CD8-positive, alpha-beta T cell (primary cell): ENCODE measurements at regions of chr6 and their contacts with region 1.

Region 1: GRCh38 chr6:110221738-110222137 is 41.5 kb downstream of the CDC40 start:
- DNase-seq: no peak
- ATAC-seq: no peak
- H3K4me3 ChIP-seq: no peak overlapping the region
- H3K4me3 Mint-ChIP-seq: no peak overlapping the region
- H3K27ac ChIP-seq: no peak overlapping the region
- H3K27ac Mint-ChIP-seq: no peak overlapping the region
- H3K4me1 ChIP-seq: no peaks in the 10 kb centered on the region
- H3K4me1 Mint-ChIP-seq: no peaks in the 10 kb centered on the region
- H3K27me3 ChIP-seq: no peaks in the 10 kb centered on the region
- H3K27me3 Mint-ChIP-seq: no peaks in the 10 kb centered on the region
- CTCF ChIP-seq: no peak

Region 2: GRCh38 chr6:110147870-110148269 is 73.9 kb before region 1 on chr6:
- CTCF ChIA-PET with region 1: no interaction called
- POLR2A ChIA-PET with region 1: no interaction called
- intact Hi-C with region 1: no loop called
- DNase-seq: no peak
- ATAC-seq: no peak
- H3K4me3 ChIP-seq: no peak overlapping the region
- H3K4me3 Mint-ChIP-seq: no peak overlapping the region
- H3K27ac ChIP-seq: no peak overlapping the region
- H3K27ac Mint-ChIP-seq: no peak overlapping the region
- H3K4me1 ChIP-seq: no peaks in the 10 kb centered on the region
- H3K4me1 Mint-ChIP-seq: no peaks in the 10 kb centered on the region
- H3K27me3 ChIP-seq: no peaks in the 10 kb centered on the region
- H3K27me3 Mint-ChIP-seq: no peaks in the 10 kb centered on the region
- CTCF ChIP-seq: no peak

Region 3: DNA sequence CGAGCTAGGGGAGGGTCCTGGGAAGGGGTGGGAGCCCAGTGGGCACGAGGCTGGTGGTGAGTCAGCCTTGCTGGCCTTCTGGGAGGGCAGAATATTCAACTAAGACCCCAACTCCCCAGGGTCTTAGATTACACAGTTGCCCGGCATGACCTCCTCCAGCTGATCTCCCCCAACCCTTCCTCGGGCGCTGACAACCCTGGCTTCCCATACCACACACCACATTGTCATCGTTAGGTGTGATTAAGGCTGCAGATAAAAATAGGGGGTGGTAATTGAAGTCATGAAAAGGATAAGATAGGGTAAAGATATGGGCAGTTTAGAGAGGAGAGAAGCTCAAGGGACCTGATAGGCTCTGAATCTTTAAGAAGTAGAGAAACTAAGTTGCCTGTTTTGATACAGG is 31.0 kb before region 1 on chr6:
- CTCF ChIA-PET with region 1: no interaction called
- POLR2A ChIA-PET with region 1: no interaction called
- intact Hi-C with region 1: no loop called
- DNase-seq: no peak
- ATAC-seq: no peak
- H3K4me3 ChIP-seq: no peak overlapping the region
- H3K4me3 Mint-ChIP-seq: no peak overlapping the region
- H3K27ac ChIP-seq: no peak overlapping the region
- H3K27ac Mint-ChIP-seq: no peak overlapping the region
- H3K4me1 ChIP-seq: peaks cover 23% of the 10 kb centered on the region
- H3K4me1 Mint-ChIP-seq: peaks cover 21% of the 10 kb centered on the region
- H3K27me3 ChIP-seq: no peaks in the 10 kb centered on the region
- H3K27me3 Mint-ChIP-seq: no peaks in the 10 kb centered on the region
- CTCF ChIP-seq: no peak

Region 4: GRCh38 chr6:110398778-110399177 is 177.0 kb after region 1 on chr6:
- CTCF ChIA-PET with region 1: no interaction called
- POLR2A ChIA-PET with region 1: no interaction called
- intact Hi-C with region 1: loop called (anchors 5 to 10 kb)
- DNase-seq: no peak
- ATAC-seq: no peak
- H3K4me3 ChIP-seq: no peak overlapping the region
- H3K4me3 Mint-ChIP-seq: no peak overlapping the region
- H3K27ac ChIP-seq: no peak overlapping the region
- H3K27ac Mint-ChIP-seq: no peak overlapping the region
- H3K4me1 ChIP-seq: no peaks in the 10 kb centered on the region
- H3K4me1 Mint-ChIP-seq: no peaks in the 10 kb centered on the region
- H3K27me3 ChIP-seq: no peaks in the 10 kb centered on the region
- H3K27me3 Mint-ChIP-seq: peaks cover 2% of the 10 kb centered on the region
- CTCF ChIP-seq: no peak